ENCODE measurements at regions of chr7 and their contacts with region 1.

Region 1: GRCh38 chr7:135801045-135801693 is 52.6 kb upstream of the FAM180A start:
- DNase-seq: peak; percentile 38
- H3K4me3 ChIP-seq: no peak overlapping the region
- H3K27ac ChIP-seq: no peak overlapping the region
- H3K4me1 ChIP-seq: no peaks in the 10 kb centered on the region
- H3K27me3 ChIP-seq: no peaks in the 10 kb centered on the region
- CTCF ChIP-seq: peak; percentile 75

Region 2: DNA sequence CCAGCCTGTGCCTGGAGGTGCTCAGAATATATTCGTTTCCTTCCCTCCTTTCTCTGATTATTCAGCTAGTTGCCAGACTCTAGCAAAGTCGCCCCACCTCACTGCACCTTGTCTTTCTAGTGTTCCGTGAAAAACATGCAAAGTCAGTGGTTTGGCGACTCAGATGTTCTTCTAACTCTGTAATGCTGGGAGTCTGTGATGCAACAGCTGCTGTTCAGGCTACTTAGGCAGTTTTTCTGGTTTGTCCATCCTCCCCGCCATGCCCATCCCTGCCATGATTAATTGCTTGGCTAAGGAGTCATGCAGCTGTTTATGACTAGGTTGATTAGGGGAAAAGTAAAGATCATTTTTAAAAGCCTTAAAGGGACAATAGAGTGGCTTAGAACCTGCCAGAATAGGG is 76.6 kb after region 1 on chr7:
- intact Hi-C with region 1: no loop called
- DNase-seq: no peak
- H3K4me3 ChIP-seq: no peak overlapping the region
- H3K27ac ChIP-seq: no peak overlapping the region
- H3K4me1 ChIP-seq: no peaks in the 10 kb centered on the region
- H3K27me3 ChIP-seq: no peaks in the 10 kb centered on the region
- CTCF ChIP-seq: no peak

Region 3: DNA sequence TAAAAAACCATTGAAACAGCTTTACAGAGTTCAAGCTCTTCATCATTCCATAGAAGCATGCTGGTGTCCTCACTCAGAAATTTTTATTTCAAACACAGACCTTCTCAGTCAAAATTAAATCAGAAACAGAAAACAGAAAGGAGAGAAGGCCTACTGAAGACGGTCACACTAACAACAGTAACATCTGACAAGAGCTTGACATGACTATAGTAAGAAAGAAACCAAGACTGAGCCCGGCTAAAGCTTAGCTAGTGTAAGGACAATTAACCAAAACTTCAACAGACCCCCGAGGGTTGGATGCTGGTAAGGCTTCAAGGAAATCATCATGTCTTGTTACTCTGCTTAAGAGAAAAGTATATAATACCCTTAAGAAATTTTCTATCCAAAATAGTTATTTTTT is 137.4 kb after region 1 on chr7:
- intact Hi-C with region 1: no loop called
- DNase-seq: no peak
- H3K4me3 ChIP-seq: no peak overlapping the region
- H3K27ac ChIP-seq: no peak overlapping the region
- H3K4me1 ChIP-seq: no peaks in the 10 kb centered on the region
- H3K27me3 ChIP-seq: no peaks in the 10 kb centered on the region
- CTCF ChIP-seq: no peak

Region 4: GRCh38 chr7:136009488-136010079 is 208.4 kb after region 1 on chr7:
- intact Hi-C with region 1: loop called (anchors 1 kb)
- DNase-seq: no peak
- H3K4me3 ChIP-seq: no peak overlapping the region
- H3K27ac ChIP-seq: no peak overlapping the region
- H3K4me1 ChIP-seq: no peaks in the 10 kb centered on the region
- H3K27me3 ChIP-seq: no peaks in the 10 kb centered on the region
- CTCF ChIP-seq: peak; percentile 61